B cell (primary cell): ENCODE measurements at regions of chr22 and their contacts with region 1.

Region 1: DNA sequence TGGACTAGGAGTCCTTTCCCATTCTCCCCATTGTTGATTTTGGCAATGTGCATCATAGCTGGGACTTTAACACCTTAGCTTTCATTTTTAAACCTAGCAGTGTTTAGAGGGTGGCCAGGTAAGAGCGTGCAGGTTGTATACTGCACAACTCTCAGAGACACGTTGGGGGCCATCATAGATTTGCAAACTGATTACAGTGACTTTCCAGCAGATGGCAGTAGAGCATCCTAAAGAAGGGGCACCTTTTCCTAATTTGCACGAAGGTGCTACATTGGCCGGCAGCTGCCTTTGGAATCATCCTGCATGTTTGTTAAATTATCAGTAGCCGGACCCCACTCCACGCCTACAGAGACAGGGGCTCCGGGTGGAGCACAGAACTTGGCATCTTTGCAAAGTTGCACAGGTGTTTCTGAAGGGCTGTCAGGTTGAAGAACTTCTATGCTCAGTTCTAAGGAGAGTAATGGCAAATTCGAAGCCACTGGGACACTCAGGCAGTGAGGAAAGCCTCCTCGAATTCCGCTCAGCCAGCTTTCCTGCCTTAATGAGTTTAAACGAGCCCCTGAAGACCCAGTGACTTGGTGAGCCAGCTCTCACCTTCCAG is 7.7 kb downstream of the LHFPL7 start:
- DNase-seq: peak; percentile 44
- ATAC-seq: no peak
- H3K4me3 ChIP-seq: no peak overlapping the region
- H3K4me3 Mint-ChIP-seq: no peak overlapping the region
- H3K27ac ChIP-seq: no peak overlapping the region
- H3K27ac Mint-ChIP-seq: no peak overlapping the region
- H3K4me1 ChIP-seq: no peaks in the 10 kb centered on the region
- H3K4me1 Mint-ChIP-seq: no peaks in the 10 kb centered on the region
- H3K27me3 ChIP-seq: peaks cover 0 to 10% (median 5%) of the 10 kb centered on the region in 4 experiments
- H3K27me3 Mint-ChIP-seq: peaks cover 9% of the 10 kb centered on the region
- CTCF ChIP-seq: peak; percentile 84

Region 2: GRCh38 chr22:24875862-24876506 is 62.9 kb before region 1 on chr22:
- CTCF ChIA-PET with region 1: no interaction called
- POLR2A ChIA-PET with region 1: no interaction called
- intact Hi-C with region 1: no loop called
- DNase-seq: no peak
- ATAC-seq: no peak
- H3K4me3 ChIP-seq: no peak overlapping the region
- H3K4me3 Mint-ChIP-seq: no peak overlapping the region
- H3K27ac ChIP-seq: no peak overlapping the region
- H3K27ac Mint-ChIP-seq: no peak overlapping the region
- H3K4me1 ChIP-seq: no peaks in the 10 kb centered on the region
- H3K4me1 Mint-ChIP-seq: no peaks in the 10 kb centered on the region
- H3K27me3 ChIP-seq: peaks cover 0 to 10% (median 0%) of the 10 kb centered on the region in 4 experiments
- H3K27me3 Mint-ChIP-seq: peaks cover 7% of the 10 kb centered on the region
- CTCF ChIP-seq: no peak

Region 3: GRCh38 chr22:25048659-25049647 is 110.1 kb after region 1 on chr22:
- CTCF ChIA-PET with region 1: interaction called, 10 read pairs
- POLR2A ChIA-PET with region 1: no interaction called
- intact Hi-C with region 1: loop called (anchors 1 kb)
- DNase-seq: peak; percentile 56
- ATAC-seq: no peak
- H3K4me3 ChIP-seq: no peak overlapping the region
- H3K4me3 Mint-ChIP-seq: no peak overlapping the region
- H3K27ac ChIP-seq: no peak overlapping the region
- H3K27ac Mint-ChIP-seq: no peak overlapping the region
- H3K4me1 ChIP-seq: no peaks in the 10 kb centered on the region
- H3K4me1 Mint-ChIP-seq: no peaks in the 10 kb centered on the region
- H3K27me3 ChIP-seq: no peaks in the 10 kb centered on the region
- H3K27me3 Mint-ChIP-seq: peaks cover 4% of the 10 kb centered on the region
- CTCF ChIP-seq: peak; percentile 75